WTC11 (cell line): ENCODE measurements at regions of chr11 and their contacts with region 1.

Region 1: GRCh38 chr11:84558085-84558905 is 1068.8 kb downstream of the DLG2 start:
- DNase-seq: peak; percentile 33
- ATAC-seq: peak; percentile 93
- H3K4me3 Mint-ChIP-seq: no peak overlapping the region
- H3K27ac Mint-ChIP-seq: no peak overlapping the region
- H3K4me1 Mint-ChIP-seq: peaks cover 4% of the 10 kb centered on the region
- H3K27me3 Mint-ChIP-seq: no peaks in the 10 kb centered on the region
- CTCF ChIP-seq: peak; percentile 69

Region 2: GRCh38 chr11:84390441-84391078 is 167.7 kb before region 1 on chr11:
- CTCF ChIA-PET with region 1: interaction called, 16 read pairs
- POLR2A ChIA-PET with region 1: interaction called, 3 read pairs
- DNase-seq: peak; percentile 43
- ATAC-seq: peak; percentile 99
- H3K4me3 Mint-ChIP-seq: no peak overlapping the region
- H3K27ac Mint-ChIP-seq: peak overlapping the region; percentile 64
- H3K4me1 Mint-ChIP-seq: peaks cover 18% of the 10 kb centered on the region
- H3K27me3 Mint-ChIP-seq: no peaks in the 10 kb centered on the region
- CTCF ChIP-seq: peak; percentile 18; the same call in 1 of the 2 replicates

Region 3: DNA sequence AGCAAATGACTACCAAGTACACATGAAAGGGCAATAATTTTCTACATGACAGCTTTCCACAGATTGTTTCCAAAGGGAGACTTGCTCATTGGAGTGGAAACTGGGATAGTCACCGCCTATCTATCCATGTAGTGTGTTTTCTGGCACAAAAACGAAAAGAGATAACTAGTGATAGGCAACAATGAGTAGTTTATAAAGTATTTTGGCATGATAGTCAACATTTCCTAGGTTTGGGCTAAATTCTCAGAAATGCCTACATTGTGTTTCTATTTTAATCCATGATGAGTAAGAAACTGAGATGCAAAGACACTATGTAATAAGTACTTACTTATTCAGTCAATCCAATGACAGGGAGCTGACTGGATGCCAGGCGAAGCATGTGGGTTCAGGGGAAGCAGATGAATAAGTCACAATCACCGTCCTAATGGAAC is 60.3 kb before region 1 on chr11:
- CTCF ChIA-PET with region 1: no interaction called
- POLR2A ChIA-PET with region 1: no interaction called
- DNase-seq: no peak
- ATAC-seq: no peak
- H3K4me3 Mint-ChIP-seq: no peak overlapping the region
- H3K27ac Mint-ChIP-seq: no peak overlapping the region
- H3K4me1 Mint-ChIP-seq: no peaks in the 10 kb centered on the region
- H3K27me3 Mint-ChIP-seq: no peaks in the 10 kb centered on the region
- CTCF ChIP-seq: no peak

Region 4: GRCh38 chr11:84588131-84588829 is 30.0 kb after region 1 on chr11:
- CTCF ChIA-PET with region 1: no interaction called
- POLR2A ChIA-PET with region 1: no interaction called
- DNase-seq: no peak
- ATAC-seq: no peak
- H3K4me3 Mint-ChIP-seq: no peak overlapping the region
- H3K27ac Mint-ChIP-seq: no peak overlapping the region
- H3K4me1 Mint-ChIP-seq: peaks cover 17% of the 10 kb centered on the region
- H3K27me3 Mint-ChIP-seq: peaks cover 5% of the 10 kb centered on the region
- CTCF ChIP-seq: no peak

Region 5: GRCh38 chr11:84720706-84721402 is 162.6 kb after region 1 on chr11:
- CTCF ChIA-PET with region 1: interaction called, 43 read pairs
- POLR2A ChIA-PET with region 1: no interaction called
- DNase-seq: peak; percentile 38
- ATAC-seq: peak; percentile 62
- H3K4me3 Mint-ChIP-seq: peak overlapping the region; percentile 87
- H3K27ac Mint-ChIP-seq: peak overlapping the region; percentile 61; the same call in 1 of the 2 replicates
- H3K4me1 Mint-ChIP-seq: peaks cover 35% of the 10 kb centered on the region
- H3K27me3 Mint-ChIP-seq: peaks cover 20% of the 10 kb centered on the region
- CTCF ChIP-seq: no peak